ENCODE measurements at regions of chr16 and their contacts with region 1.

Region 1: GRCh38 chr16:15704545-15704987 is 54.5 kb downstream of the NDE1 start:
- DNase-seq: peak; percentile 77
- H3K4me3 ChIP-seq: no peak overlapping the region; a peak in 1 of 4 replicates
- H3K27ac ChIP-seq: no peak overlapping the region
- H3K4me1 ChIP-seq: peaks cover 0 to 4% of the 10 kb centered on the region in 2 experiments; a peak in 1 of 4 replicates
- H3K27me3 ChIP-seq: no peaks in the 10 kb centered on the region
- CTCF ChIP-seq: peak; percentile 85
- EP300 ChIP-seq: no peak
- RAD21 ChIP-seq: peak; percentile 73

Region 2: DNA sequence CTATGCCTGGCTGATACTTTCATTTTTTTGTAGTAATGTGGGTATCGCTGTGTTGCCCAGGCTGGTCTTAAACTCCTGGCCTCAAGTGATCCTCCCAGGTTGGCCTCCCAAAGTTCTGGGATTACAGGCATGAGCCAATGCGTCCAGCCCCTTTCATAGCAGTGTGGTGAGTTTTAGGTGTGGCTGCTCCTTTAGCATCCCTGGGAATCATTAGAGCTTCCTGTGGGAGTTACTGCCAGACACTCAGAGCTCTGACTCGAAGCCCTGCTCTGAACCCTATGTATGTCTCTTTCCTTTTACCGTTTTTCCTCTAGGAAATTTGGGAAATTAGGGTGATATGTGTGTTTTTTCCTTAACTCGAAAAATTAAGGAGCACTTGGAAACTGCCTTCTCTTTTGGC is 10.1 kb before region 1 on chr16:
- CTCF ChIA-PET with region 1: interaction called, 11 read pairs
- POLR2A ChIA-PET with region 1: no interaction called
- DNase-seq: no peak
- H3K4me3 ChIP-seq: no peak overlapping the region
- H3K27ac ChIP-seq: no peak overlapping the region
- H3K4me1 ChIP-seq: peaks cover 0 to 4% of the 10 kb centered on the region in 2 experiments; a peak in 1 of 4 replicates
- H3K27me3 ChIP-seq: no peaks in the 10 kb centered on the region
- CTCF ChIP-seq: no peak
- EP300 ChIP-seq: no peak
- RAD21 ChIP-seq: no peak

Region 3: GRCh38 chr16:15714393-15715172 is 10.0 kb after region 1 on chr16:
- CTCF ChIA-PET with region 1: interaction called, 39 read pairs
- POLR2A ChIA-PET with region 1: no interaction called
- DNase-seq: no peak
- H3K4me3 ChIP-seq: no peak overlapping the region
- H3K27ac ChIP-seq: no peak overlapping the region
- H3K4me1 ChIP-seq: no peaks in the 10 kb centered on the region
- H3K27me3 ChIP-seq: no peaks in the 10 kb centered on the region
- CTCF ChIP-seq: no peak
- EP300 ChIP-seq: no peak
- RAD21 ChIP-seq: no peak

Region 4: GRCh38 chr16:15822957-15823356 is 118.4 kb after region 1 on chr16:
- CTCF ChIA-PET with region 1: no interaction called
- POLR2A ChIA-PET with region 1: no interaction called
- DNase-seq: no peak
- H3K4me3 ChIP-seq: no peak overlapping the region
- H3K27ac ChIP-seq: no peak overlapping the region
- H3K4me1 ChIP-seq: no peaks in the 10 kb centered on the region
- H3K27me3 ChIP-seq: no peaks in the 10 kb centered on the region; the same call in 1 of the 2 replicates
- CTCF ChIP-seq: no peak
- EP300 ChIP-seq: no peak
- RAD21 ChIP-seq: no peak